Activated naive CD4-positive, alpha-beta T cell treated with anti-CD3 and anti-CD28 coated beads for 36 hours (primary cell): ENCODE measurements at regions of chr11 and their contacts with region 1.

Region 1: GRCh38 chr11:31107062-31107461 is 262.5 kb downstream of the DCDC1 start:
- DNase-seq: peak; percentile 75
- H3K4me3 Mint-ChIP-seq: no peak overlapping the region
- H3K27ac Mint-ChIP-seq: no peak overlapping the region
- H3K4me1 Mint-ChIP-seq: no peaks in the 10 kb centered on the region
- H3K27me3 Mint-ChIP-seq: peaks cover 2% of the 10 kb centered on the region

Region 2: GRCh38 chr11:31089117-31089516 is 17.9 kb before region 1 on chr11:
- CTCF ChIA-PET with region 1: no interaction called
- intact Hi-C with region 1: no loop called
- DNase-seq: no peak
- H3K4me3 Mint-ChIP-seq: no peak overlapping the region
- H3K27ac Mint-ChIP-seq: no peak overlapping the region
- H3K4me1 Mint-ChIP-seq: no peaks in the 10 kb centered on the region
- H3K27me3 Mint-ChIP-seq: no peaks in the 10 kb centered on the region

Region 3: GRCh38 chr11:31233424-31233823 is 126.4 kb after region 1 on chr11:
- CTCF ChIA-PET with region 1: interaction called, 3 read pairs
- intact Hi-C with region 1: loop called (anchors 2 kb)
- DNase-seq: no peak
- H3K4me3 Mint-ChIP-seq: no peak overlapping the region
- H3K27ac Mint-ChIP-seq: no peak overlapping the region
- H3K4me1 Mint-ChIP-seq: no peaks in the 10 kb centered on the region
- H3K27me3 Mint-ChIP-seq: peaks cover 4% of the 10 kb centered on the region

Region 4: GRCh38 chr11:31325160-31325559 is 218.1 kb after region 1 on chr11:
- CTCF ChIA-PET with region 1: no interaction called
- intact Hi-C with region 1: no loop called
- DNase-seq: no peak
- H3K4me3 Mint-ChIP-seq: no peak overlapping the region
- H3K27ac Mint-ChIP-seq: no peak overlapping the region
- H3K4me1 Mint-ChIP-seq: peaks cover 4% of the 10 kb centered on the region
- H3K27me3 Mint-ChIP-seq: no peaks in the 10 kb centered on the region

Region 5: GRCh38 chr11:31340903-31341572 is 234.0 kb after region 1 on chr11:
- CTCF ChIA-PET with region 1: no interaction called
- intact Hi-C with region 1: loop called (anchors 10 kb)
- DNase-seq: peak; percentile 15
- H3K4me3 Mint-ChIP-seq: no peak overlapping the region
- H3K27ac Mint-ChIP-seq: no peak overlapping the region
- H3K4me1 Mint-ChIP-seq: no peaks in the 10 kb centered on the region
- H3K27me3 Mint-ChIP-seq: peaks cover 16% of the 10 kb centered on the region

Region 6: DNA sequence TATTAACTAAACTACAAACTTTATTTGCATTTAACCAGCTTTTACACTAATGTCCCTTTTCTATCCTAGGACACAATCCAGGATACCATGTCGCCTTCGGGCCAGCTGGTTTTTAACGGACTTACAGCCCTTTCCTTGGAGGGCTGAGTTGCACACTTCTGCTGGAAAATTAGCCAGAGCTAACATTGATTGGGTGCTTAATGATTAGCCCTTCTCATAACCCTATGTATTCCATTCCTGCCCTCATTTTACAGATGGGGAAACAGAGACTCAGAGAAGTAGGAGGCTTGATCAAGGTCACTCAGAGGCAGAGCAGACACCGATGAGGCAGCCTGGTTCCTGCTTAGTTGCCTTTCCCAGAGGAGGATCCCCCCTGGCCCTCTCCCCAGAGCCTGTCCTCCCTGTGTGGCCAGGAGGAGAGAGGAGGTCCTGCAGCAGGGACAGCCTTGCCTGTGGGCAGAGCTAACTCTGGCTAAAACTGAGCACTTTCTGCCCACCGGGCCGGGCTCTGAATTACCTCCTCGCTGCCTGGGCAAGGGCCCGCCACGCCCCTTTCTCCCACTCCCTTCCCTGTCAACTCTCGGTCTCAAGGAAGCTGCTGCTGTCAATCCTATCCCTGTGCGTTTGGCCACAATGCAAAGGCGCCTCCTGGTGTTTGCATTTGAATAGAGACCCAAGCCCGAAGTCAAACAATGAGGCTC is 763.7 kb after region 1 on chr11:
- CTCF ChIA-PET with region 1: interaction called, 4 read pairs
- intact Hi-C with region 1: loop called (anchors 1 kb)
- DNase-seq: peak; percentile 51
- H3K4me3 Mint-ChIP-seq: no peak overlapping the region
- H3K27ac Mint-ChIP-seq: no peak overlapping the region
- H3K4me1 Mint-ChIP-seq: no peaks in the 10 kb centered on the region
- H3K27me3 Mint-ChIP-seq: peaks cover 30% of the 10 kb centered on the region

Region 7: GRCh38 chr11:31958076-31958735 is 851.1 kb after region 1 on chr11:
- CTCF ChIA-PET with region 1: interaction called, 14 read pairs
- intact Hi-C with region 1: loop called (anchors 1 kb)
- DNase-seq: peak; percentile 76
- H3K4me3 Mint-ChIP-seq: no peak overlapping the region
- H3K27ac Mint-ChIP-seq: no peak overlapping the region
- H3K4me1 Mint-ChIP-seq: no peaks in the 10 kb centered on the region
- H3K27me3 Mint-ChIP-seq: no peaks in the 10 kb centered on the region

Region 8: GRCh38 chr11:32006799-32007388 is 899.8 kb after region 1 on chr11:
- CTCF ChIA-PET with region 1: no interaction called
- intact Hi-C with region 1: loop called (anchors 5 kb)
- DNase-seq: peak; percentile 31
- H3K4me3 Mint-ChIP-seq: no peak overlapping the region
- H3K27ac Mint-ChIP-seq: no peak overlapping the region
- H3K4me1 Mint-ChIP-seq: no peaks in the 10 kb centered on the region
- H3K27me3 Mint-ChIP-seq: peaks cover 20% of the 10 kb centered on the region

Region 9: DNA sequence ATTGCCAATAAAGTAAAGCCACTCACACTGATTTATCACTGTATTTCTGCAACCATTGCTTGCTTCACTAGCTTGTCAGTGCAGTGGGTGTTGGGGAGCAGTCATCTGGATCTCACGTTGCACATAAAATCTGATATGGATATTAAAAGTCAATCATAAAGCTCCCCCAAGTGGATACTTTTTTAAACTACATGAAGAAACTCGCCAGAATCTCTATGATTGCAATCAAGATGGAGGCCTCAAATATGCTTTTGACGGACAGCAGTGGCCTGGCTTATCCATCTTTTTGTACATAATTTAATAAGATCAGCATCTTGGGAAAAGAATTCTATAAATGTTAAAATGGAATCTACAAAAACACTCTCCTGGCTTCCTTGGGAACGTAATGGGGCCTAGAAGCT is 1190.5 kb after region 1 on chr11:
- CTCF ChIA-PET with region 1: no interaction called
- intact Hi-C with region 1: loop called (anchors 1 kb)
- DNase-seq: no peak
- H3K4me3 Mint-ChIP-seq: no peak overlapping the region
- H3K27ac Mint-ChIP-seq: no peak overlapping the region
- H3K4me1 Mint-ChIP-seq: no peaks in the 10 kb centered on the region
- H3K27me3 Mint-ChIP-seq: no peaks in the 10 kb centered on the region